Cardiac septum (tissue), 1 donor: ENCODE measurements at regions of chr5 and their contacts with region 1.

Region 1: DNA sequence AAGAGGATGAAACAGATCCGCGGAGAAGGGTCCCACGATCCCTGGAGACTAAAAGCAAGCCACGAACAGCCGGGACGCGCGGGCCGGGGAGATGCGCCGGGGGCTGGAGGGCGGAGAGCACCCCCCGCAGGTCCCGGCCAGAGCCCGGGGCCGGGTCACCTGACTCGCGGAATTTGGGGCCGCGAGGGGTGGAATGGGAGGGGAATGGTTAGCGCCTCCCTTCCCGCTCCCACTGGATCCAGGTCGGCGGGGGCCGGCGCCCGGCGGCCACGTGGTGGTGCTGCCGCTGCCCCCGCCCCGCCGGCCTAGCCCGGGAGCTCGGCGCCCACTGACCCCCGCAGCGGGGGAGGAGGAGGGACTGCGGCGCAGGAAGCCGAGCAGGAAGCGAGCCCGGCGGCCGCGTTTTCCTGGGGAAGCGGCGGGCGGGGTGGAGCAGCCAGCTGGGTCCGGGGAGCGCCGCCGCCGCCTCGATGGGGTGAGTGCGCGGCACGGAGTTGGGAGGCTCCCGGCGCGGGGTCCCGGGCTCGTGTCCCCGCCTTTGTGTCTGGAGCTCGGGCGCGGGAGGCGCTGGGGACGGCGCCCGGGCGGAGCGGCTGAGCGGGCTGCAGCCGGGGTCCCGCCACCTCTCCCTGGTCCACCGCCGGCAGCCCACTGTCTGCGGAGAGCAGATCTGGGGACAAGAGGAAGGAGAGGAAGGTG is at the start of gene RAI14:
- DNase-seq: peak; percentile 89
- total RNA-seq, gene RAI14: 17.5 TPM

Region 2: DNA sequence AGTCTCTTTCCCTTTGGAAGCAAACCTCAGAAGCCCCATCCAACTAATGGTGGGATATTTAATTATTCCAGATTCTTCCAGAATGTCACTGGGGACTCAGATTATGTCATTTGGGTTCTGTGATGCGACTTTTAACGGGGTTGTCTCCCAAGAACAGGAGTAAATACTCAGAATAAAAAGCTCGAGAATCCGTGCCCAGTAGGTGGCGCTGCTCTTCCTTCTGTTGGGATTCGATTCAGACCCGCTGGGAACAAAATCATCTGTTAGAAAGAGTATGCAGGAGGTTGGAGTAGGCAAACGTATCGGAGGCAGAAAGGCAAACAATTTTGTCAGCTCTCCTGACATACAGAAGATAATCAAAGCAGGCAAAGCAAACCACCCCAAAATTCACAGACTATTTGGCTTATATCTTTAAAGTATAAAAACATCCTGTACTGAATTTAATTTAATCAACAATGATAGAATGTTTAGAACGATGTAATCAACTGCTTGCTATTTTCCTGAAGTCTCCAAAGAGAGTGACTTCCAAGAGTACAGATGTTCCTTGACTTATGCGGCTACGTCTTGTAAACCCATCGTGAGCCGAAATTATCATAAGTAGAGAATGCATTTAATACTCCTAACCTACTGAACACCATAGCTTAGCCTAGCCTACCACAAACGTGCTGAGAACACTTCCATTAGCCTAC is 169.8 kb before region 1 on chr5:
- intact Hi-C with region 1: loop called (anchors 5 kb)
- DNase-seq: peak; percentile 83

Region 3: GRCh38 chr5:34522599-34523386 is 133.4 kb before region 1 on chr5:
- intact Hi-C with region 1: loop called (anchors 5 kb)
- DNase-seq: no peak

Region 4: DNA sequence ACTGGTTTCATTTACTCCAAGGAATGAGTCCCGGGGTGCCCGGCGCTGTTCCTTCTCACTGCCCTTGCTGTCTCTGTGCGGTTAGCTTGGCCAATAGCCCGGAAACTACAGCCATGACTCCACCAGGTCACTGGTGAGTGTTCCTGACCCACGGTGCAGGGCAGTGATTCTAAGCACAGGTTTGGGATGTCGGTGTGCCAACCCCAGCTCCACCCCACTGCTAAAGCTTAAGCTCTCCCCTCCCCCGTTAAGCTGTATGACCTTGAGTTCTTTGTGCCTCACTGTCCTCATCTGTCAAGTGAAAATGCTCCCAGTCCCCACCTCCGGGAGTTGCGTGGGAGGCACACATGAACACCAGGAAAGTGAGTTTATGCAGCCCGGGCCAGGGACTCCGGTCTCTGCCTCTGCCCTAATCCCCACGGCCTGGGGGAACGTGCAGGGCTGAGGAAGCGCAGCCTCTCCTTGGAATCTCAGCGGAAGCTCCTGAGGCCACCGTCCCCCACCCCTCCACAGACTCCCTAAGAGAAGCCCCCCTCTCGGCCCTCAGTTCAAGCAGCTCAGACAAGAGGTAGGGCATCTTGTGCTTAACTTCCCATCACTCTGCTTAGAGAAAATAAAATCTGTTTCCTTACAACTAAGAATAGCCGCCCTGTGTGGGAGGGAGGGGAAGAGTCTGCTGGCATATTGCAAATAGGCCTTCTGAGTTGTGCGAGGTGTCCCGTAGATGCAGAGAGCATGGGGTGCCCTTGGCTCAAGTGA is 92.0 kb before region 1 on chr5:
- intact Hi-C with region 1: loop called (anchors 10 kb)
- DNase-seq: peak; percentile 74

Region 5: GRCh38 chr5:34686762-34687268 is 30.7 kb after region 1 on chr5:
- intact Hi-C with region 1: loop called (anchors 5 kb)
- DNase-seq: peak; percentile 77

Region 6: GRCh38 chr5:34699155-34700077 is 43.3 kb after region 1 on chr5:
- intact Hi-C with region 1: no loop called
- DNase-seq: no peak

Region 7: GRCh38 chr5:34838785-34839714 is 182.9 kb after region 1 on chr5 and contains the start of gene TTC23L:
- intact Hi-C with region 1: loop called (anchors 5 kb)
- DNase-seq: peak; percentile 89
- total RNA-seq, gene TTC23L: 0.32 TPM

Region 8: DNA sequence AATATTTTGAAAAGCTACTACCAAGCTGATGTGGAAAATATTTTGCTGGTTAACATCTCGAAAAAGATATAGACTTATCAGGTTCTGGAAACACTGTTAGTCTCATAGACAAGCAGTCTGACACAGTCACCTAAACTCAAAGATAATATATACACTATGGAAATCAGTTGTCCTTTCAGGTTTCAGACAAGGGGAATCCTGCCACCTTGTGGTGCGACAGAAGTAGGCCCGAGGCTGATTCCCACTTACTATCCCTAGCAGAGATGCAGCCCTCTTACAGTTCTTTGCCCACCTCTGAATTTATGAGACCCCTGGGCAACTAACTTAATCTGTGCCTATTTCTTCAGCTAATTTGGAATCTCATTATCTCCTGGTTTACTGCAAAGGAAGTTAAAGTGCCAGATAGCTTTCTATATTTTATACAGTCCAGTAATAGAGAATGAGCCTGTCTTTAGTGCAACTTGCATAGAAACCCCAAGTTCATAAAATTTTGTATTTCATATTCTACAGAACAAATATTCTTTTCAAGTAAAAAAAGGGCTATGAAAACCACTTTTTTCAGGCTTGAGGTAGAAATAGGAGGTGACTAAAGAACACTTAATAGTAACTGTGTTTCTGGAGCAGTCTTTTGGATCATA is 242.2 kb after region 1 on chr5:
- intact Hi-C with region 1: loop called (anchors 5 kb)
- DNase-seq: no peak